Activated CD8-positive, alpha-beta T cell treated with anti-CD3 and anti-CD28 coated beads, Interleukin-2, amount 10 ng/mL, durations not matched to agents 7 days and 5 days (primary cell): ENCODE measurements at regions of chr2 and their contacts with region 1.

Region 1: GRCh38 chr2:69565431-69565839 is 78.1 kb downstream of the AAK1 start:
- DNase-seq: peak; percentile 80
- ATAC-seq: peak; percentile 89
- H3K4me3 Mint-ChIP-seq: no peak overlapping the region
- H3K27ac Mint-ChIP-seq: peak overlapping the region; percentile 6
- H3K4me1 Mint-ChIP-seq: peaks cover 55% of the 10 kb centered on the region
- H3K27me3 Mint-ChIP-seq: no peaks in the 10 kb centered on the region

Region 2: GRCh38 chr2:69113627-69114026 is 451.8 kb before region 1 on chr2:
- CTCF ChIA-PET with region 1: no interaction called
- POLR2A ChIA-PET with region 1: no interaction called
- DNase-seq: no peak
- ATAC-seq: no peak
- H3K4me3 Mint-ChIP-seq: no peak overlapping the region
- H3K27ac Mint-ChIP-seq: no peak overlapping the region
- H3K4me1 Mint-ChIP-seq: no peaks in the 10 kb centered on the region
- H3K27me3 Mint-ChIP-seq: peaks cover 16% of the 10 kb centered on the region

Region 3: DNA sequence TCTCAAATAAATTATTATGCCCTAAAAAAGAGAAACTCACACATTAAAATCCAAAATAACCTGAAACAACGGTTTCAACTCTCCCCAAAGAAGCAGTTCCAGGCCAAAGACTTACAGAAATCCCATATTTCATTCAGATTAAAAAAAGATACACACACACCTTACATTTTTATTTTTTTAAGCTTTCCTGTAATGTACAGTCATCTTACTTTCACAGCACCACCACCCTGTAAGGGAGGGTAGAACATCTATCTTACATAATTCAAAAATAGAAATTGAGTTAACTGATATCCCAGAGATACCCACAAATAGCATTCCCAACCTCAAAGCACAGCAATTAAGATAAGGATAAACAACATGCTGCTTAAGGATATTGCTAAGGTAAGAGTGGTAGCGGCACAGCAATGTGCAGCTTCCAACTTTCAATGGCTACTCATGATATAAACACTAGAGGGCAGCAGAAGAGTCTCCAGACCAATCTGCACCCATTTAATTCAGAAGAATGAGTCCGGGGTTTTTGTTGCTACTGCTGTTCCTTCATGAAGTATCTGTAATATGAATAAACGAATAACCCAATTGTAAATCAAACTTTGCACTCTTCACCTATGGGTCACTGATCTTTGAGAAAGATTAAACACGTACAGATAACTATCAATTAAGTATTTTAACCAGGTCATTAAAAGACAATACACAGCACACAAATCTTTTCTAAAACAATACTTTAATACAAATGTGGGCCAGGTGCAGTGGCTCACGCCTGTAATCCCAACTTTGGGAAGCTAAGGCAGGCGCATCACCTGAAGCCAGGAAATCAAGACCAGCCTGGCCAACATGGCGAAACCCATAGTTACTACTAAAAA is 189.7 kb before region 1 on chr2:
- CTCF ChIA-PET with region 1: interaction called, 17 read pairs
- POLR2A ChIA-PET with region 1: no interaction called
- DNase-seq: peak; percentile 47
- ATAC-seq: peak; percentile 79
- H3K4me3 Mint-ChIP-seq: no peak overlapping the region
- H3K27ac Mint-ChIP-seq: no peak overlapping the region
- H3K4me1 Mint-ChIP-seq: peaks cover 14% of the 10 kb centered on the region
- H3K27me3 Mint-ChIP-seq: no peaks in the 10 kb centered on the region

Region 4: DNA sequence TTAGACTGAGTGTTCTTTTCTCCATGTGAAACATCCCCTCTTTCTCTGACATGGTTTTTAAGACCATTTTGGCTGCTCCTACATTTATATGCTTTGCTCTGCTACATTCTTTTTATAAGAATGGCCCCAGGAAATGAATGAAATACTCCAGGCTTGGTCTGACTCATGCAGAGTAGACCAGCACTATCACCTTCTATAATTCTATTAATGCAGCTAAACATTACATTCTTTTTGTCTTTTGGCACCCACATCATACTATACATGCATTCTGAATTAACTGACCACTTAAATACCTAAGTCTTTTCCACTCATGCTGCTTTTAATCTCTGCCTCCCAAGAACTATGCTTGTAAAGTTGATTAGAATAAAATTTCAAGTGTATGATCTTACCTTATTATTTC is 16.0 kb before region 1 on chr2:
- CTCF ChIA-PET with region 1: interaction called, 34 read pairs
- POLR2A ChIA-PET with region 1: no interaction called
- DNase-seq: no peak
- ATAC-seq: no peak
- H3K4me3 Mint-ChIP-seq: no peak overlapping the region
- H3K27ac Mint-ChIP-seq: no peak overlapping the region
- H3K4me1 Mint-ChIP-seq: peaks cover 6% of the 10 kb centered on the region
- H3K27me3 Mint-ChIP-seq: no peaks in the 10 kb centered on the region

Region 5: DNA sequence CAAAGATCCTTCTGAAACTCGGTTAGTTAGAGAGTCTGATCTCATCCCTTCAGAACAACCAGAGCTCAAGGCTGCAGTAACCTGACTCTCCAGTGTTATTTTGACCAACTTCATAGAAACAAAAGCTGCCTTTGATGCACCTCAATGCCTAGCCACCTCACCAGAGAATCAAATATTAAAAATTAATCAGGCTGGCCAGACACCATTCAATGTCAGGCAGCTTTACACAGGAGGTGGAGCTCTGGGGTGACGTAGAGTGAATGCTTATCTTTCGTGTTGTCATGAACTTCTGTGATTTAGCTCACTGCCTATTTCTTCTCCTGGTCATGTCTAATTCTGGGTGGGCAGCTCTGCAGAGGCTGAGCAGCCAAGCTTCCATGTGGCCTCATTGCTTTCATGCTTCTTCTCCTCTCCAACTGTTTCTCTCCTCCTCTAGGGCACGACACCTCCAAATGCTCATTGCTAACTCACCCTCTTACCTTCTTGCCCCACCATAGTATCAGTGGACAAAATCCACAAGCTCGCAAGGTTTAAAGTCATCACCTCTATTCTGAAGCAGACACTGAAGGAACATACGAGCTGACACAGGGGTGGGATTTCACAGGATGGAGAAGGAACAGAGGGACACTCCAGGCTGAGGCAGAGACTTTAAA is 38.7 kb after region 1 on chr2:
- CTCF ChIA-PET with region 1: interaction called, 12 read pairs
- POLR2A ChIA-PET with region 1: no interaction called
- DNase-seq: no peak
- ATAC-seq: no peak
- H3K4me3 Mint-ChIP-seq: no peak overlapping the region
- H3K27ac Mint-ChIP-seq: no peak overlapping the region
- H3K4me1 Mint-ChIP-seq: peaks cover 78% of the 10 kb centered on the region
- H3K27me3 Mint-ChIP-seq: no peaks in the 10 kb centered on the region

Region 6: GRCh38 chr2:69643602-69644505 is 78.4 kb after region 1 on chr2 and contains the start of gene AAK1:
- CTCF ChIA-PET with region 1: interaction called, 43 read pairs
- POLR2A ChIA-PET with region 1: interaction called, 3 read pairs
- DNase-seq: peak; percentile 90
- ATAC-seq: peak; percentile 66
- H3K4me3 Mint-ChIP-seq: peak within 1 kb of the TSS; percentile 92
- H3K27ac Mint-ChIP-seq: peak within 1 kb of the TSS; percentile 98
- H3K4me1 Mint-ChIP-seq: peaks cover 56% of the 10 kb centered on the region
- H3K27me3 Mint-ChIP-seq: no peaks in the 10 kb centered on the region
- total RNA-seq, gene AAK1: 105 to 107 TPM

Region 7: GRCh38 chr2:69704446-69704845 is 139.0 kb after region 1 on chr2:
- CTCF ChIA-PET with region 1: interaction called, 14 read pairs
- POLR2A ChIA-PET with region 1: no interaction called
- DNase-seq: no peak
- ATAC-seq: no peak
- H3K4me3 Mint-ChIP-seq: no peak overlapping the region
- H3K27ac Mint-ChIP-seq: no peak overlapping the region
- H3K4me1 Mint-ChIP-seq: peaks cover 3% of the 10 kb centered on the region
- H3K27me3 Mint-ChIP-seq: peaks cover 3% of the 10 kb centered on the region

Region 8: DNA sequence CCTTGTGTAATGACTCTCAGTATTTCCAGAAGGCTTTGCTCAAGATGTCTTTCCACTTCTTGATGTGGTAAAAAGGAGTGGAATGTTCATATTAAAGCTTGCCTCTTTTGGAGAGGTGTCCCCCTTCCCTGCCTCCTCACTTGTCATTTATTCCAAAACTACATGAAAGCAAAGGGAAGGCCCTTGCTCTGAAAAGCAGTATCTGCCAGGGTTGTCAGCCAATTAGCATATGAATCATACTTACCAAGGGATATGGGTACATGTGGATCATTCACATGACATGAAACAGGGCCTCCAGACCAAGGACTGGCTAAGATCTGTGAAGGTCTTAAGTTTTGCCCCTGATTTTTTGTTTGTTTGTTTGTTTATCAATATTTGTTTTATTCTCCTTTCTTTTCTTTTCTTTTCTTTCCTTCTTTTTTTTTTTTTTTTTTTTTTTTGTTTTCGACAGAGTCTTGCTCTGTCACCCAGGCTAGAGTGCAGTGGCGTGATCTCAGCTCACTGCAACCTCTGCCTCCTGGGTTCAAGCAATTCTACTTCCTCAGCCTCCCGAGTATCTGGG is 207.9 kb after region 1 on chr2:
- CTCF ChIA-PET with region 1: no interaction called
- POLR2A ChIA-PET with region 1: no interaction called
- DNase-seq: no peak
- ATAC-seq: peak; percentile 21
- H3K4me3 Mint-ChIP-seq: no peak overlapping the region
- H3K27ac Mint-ChIP-seq: no peak overlapping the region
- H3K4me1 Mint-ChIP-seq: peaks cover 60% of the 10 kb centered on the region
- H3K27me3 Mint-ChIP-seq: no peaks in the 10 kb centered on the region

Region 9: GRCh38 chr2:70304498-70304897 is 739.1 kb after region 1 on chr2:
- CTCF ChIA-PET with region 1: no interaction called
- POLR2A ChIA-PET with region 1: no interaction called
- DNase-seq: no peak
- ATAC-seq: no peak
- H3K4me3 Mint-ChIP-seq: no peak overlapping the region
- H3K27ac Mint-ChIP-seq: no peak overlapping the region
- H3K4me1 Mint-ChIP-seq: peaks cover 21% of the 10 kb centered on the region
- H3K27me3 Mint-ChIP-seq: no peaks in the 10 kb centered on the region